CD4-positive, alpha-beta T cell (primary cell): ENCODE measurements at regions of chr1 and their contacts with region 1.

Region 1: GRCh38 chr1:149962123-149962548 is 25.5 kb upstream of the MTMR11 start:
- DNase-seq: peak in 13 of 14 experiments; percentile 11 to 80 (median 22)
- ATAC-seq: peak; percentile 89
- H3K4me3 ChIP-seq: no peak overlapping the region
- H3K4me3 Mint-ChIP-seq: no peak overlapping the region
- H3K27ac ChIP-seq: no peak overlapping the region
- H3K27ac Mint-ChIP-seq: no peak overlapping the region
- H3K4me1 ChIP-seq: peaks cover 3% of the 10 kb centered on the region
- H3K4me1 Mint-ChIP-seq: peaks cover 21% of the 10 kb centered on the region
- H3K27me3 ChIP-seq: no peaks in the 10 kb centered on the region
- H3K27me3 Mint-ChIP-seq: no peaks in the 10 kb centered on the region
- CTCF ChIP-seq: peak; percentile 93

Region 2: GRCh38 chr1:150051089-150051373 is 88.9 kb after region 1 on chr1:
- CTCF ChIA-PET with region 1: interaction called, 14 read pairs
- POLR2A ChIA-PET with region 1: no interaction called
- intact Hi-C with region 1: loop called (anchors 1 kb)
- DNase-seq: no peak
- ATAC-seq: no peak
- H3K4me3 ChIP-seq: no peak overlapping the region
- H3K4me3 Mint-ChIP-seq: no peak overlapping the region
- H3K27ac ChIP-seq: no peak overlapping the region
- H3K27ac Mint-ChIP-seq: no peak overlapping the region
- H3K4me1 ChIP-seq: no peaks in the 10 kb centered on the region
- H3K4me1 Mint-ChIP-seq: no peaks in the 10 kb centered on the region
- H3K27me3 ChIP-seq: no peaks in the 10 kb centered on the region
- H3K27me3 Mint-ChIP-seq: peaks cover 6% of the 10 kb centered on the region
- CTCF ChIP-seq: no peak

Region 3: GRCh38 chr1:150168960-150169601 is 206.9 kb after region 1 on chr1:
- CTCF ChIA-PET with region 1: no interaction called
- POLR2A ChIA-PET with region 1: no interaction called
- intact Hi-C with region 1: loop called (anchors 5 kb)
- DNase-seq: peak in 11 of 14 experiments; percentile 33 to 75 (median 45)
- ATAC-seq: no peak
- H3K4me3 ChIP-seq: no peak overlapping the region
- H3K4me3 Mint-ChIP-seq: no peak overlapping the region
- H3K27ac ChIP-seq: no peak overlapping the region
- H3K27ac Mint-ChIP-seq: no peak overlapping the region
- H3K4me1 ChIP-seq: peaks cover 6% of the 10 kb centered on the region
- H3K4me1 Mint-ChIP-seq: no peaks in the 10 kb centered on the region
- H3K27me3 ChIP-seq: peaks cover 0 to 2% of the 10 kb centered on the region in 2 experiments
- H3K27me3 Mint-ChIP-seq: no peaks in the 10 kb centered on the region
- CTCF ChIP-seq: peak; percentile 66

Region 4: GRCh38 chr1:150186789-150187559 is 224.8 kb after region 1 on chr1:
- CTCF ChIA-PET with region 1: interaction called, 14 read pairs
- POLR2A ChIA-PET with region 1: interaction called, 3 read pairs
- intact Hi-C with region 1: loop called (anchors 1 kb)
- DNase-seq: peak in 7 of 14 experiments; percentile 6 to 79 (median 49)
- ATAC-seq: peak; percentile 84
- H3K4me3 ChIP-seq: no peak overlapping the region
- H3K4me3 Mint-ChIP-seq: no peak overlapping the region
- H3K27ac ChIP-seq: no peak overlapping the region
- H3K27ac Mint-ChIP-seq: no peak overlapping the region
- H3K4me1 ChIP-seq: peaks cover 10% of the 10 kb centered on the region
- H3K4me1 Mint-ChIP-seq: peaks cover 9% of the 10 kb centered on the region
- H3K27me3 ChIP-seq: peaks cover 0 to 3% of the 10 kb centered on the region in 2 experiments
- H3K27me3 Mint-ChIP-seq: peaks cover 4% of the 10 kb centered on the region
- CTCF ChIP-seq: peak; percentile 86

Region 5: GRCh38 chr1:150243003-150243402 is 280.9 kb after region 1 on chr1:
- CTCF ChIA-PET with region 1: no interaction called
- POLR2A ChIA-PET with region 1: no interaction called
- intact Hi-C with region 1: no loop called
- DNase-seq: no peak
- ATAC-seq: no peak
- H3K4me3 ChIP-seq: no peak overlapping the region
- H3K4me3 Mint-ChIP-seq: no peak overlapping the region
- H3K27ac ChIP-seq: no peak overlapping the region
- H3K27ac Mint-ChIP-seq: no peak overlapping the region
- H3K4me1 ChIP-seq: no peaks in the 10 kb centered on the region
- H3K4me1 Mint-ChIP-seq: no peaks in the 10 kb centered on the region
- H3K27me3 ChIP-seq: no peaks in the 10 kb centered on the region
- H3K27me3 Mint-ChIP-seq: no peaks in the 10 kb centered on the region
- CTCF ChIP-seq: no peak